Caco-2 (cell line): ENCODE measurements at regions of chr10 and their contacts with region 1.

Region 1: DNA sequence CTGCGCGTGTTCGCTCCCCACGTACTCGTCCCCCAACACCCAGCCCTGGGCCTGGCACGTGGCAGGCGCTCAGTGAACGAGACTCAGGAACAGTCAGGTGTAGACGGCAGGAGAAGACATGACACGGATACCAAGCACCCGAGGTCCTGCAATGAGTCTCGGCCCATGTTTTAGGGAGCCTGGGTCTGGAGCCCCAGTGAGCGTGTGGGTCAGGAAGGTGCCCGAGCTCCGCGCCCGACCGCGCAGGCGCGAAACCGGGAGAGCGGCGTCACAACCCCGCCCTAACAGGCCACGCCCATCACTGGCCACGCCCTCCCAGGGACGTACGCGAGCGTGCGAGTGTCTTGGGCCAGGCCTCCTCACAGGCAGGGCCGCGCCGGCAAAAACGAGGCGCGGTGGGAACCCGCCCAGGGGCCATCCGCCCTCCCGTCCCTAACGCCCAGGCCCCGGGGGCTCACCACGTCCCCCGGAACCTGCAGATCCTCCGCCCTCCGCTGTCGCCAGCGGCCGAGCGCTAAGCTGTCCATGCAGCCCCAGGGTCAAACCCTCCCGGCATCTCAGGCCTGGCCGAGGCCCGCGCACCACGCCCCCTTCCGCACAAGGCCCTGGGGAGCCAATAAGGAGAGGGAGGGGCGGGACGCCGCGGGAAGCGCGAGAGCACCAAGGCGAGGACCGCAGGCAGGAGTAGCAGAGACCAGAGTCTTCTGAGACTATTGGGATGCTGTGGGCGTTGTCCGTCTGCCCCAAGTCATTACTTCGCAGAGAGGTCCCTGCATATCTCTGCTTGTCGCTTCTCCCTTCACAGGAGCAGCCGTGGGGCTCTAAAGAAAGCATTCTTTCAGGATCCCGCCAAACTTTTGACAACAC is at the start of gene C10orf143:
- DNase-seq: peak; percentile 97 to 98
- H3K4me3 ChIP-seq: peak within 1 kb of the TSS; percentile 82
- H3K4me3 Mint-ChIP-seq: peak within 1 kb of the TSS; percentile 91
- H3K27ac Mint-ChIP-seq: peak within 1 kb of the TSS; percentile 91
- H3K4me1 ChIP-seq: peaks cover 5% of the 10 kb centered on the region
- H3K4me1 Mint-ChIP-seq: peaks cover 7% of the 10 kb centered on the region
- H3K27me3 ChIP-seq: no peaks in the 10 kb centered on the region
- H3K27me3 Mint-ChIP-seq: no peaks in the 10 kb centered on the region
- CTCF ChIP-seq: peak in 1 of 2 experiments; percentile 4
- total RNA-seq, gene C10orf143: 0.54 TPM in 1 of 2 replicates, not detected in the other

Region 2: DNA sequence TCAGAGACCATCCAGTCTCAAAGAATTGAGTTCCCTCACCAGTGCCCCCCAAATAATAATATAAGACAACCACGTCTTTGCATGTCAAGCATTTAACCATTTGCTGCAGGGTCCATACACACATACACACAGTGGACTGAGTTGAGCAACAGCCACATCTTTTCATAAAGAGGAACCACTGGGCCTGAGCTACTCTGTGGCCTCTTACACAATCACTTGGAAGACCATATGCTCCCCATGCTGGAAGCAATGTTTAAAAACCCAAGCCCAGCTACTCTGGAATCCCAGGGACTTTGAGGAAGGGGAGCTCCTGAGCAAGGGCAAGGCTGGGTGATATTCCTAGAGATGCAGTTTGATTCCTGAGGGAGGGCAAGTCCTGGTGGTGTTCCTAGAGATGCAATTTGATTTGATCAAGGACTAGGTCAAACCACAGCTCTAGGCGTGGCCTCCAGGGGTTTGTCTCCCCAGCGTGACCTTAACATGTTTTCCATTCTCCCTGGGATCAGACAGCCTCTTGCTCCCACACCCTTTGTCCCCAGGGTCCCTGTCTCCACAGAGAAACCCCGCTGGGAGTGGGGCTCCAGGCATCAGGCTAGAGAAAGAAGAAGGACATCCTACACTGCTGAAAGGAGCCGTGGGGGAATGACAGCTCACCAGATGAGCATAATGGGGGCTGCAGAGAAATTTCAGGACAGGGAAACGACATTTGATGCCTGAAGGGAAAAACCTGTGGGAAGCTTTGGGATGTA is 1019.7 kb before region 1 on chr10:
- CTCF ChIA-PET with region 1: no interaction called
- POLR2A ChIA-PET with region 1: no interaction called
- intact Hi-C with region 1: no loop called
- DNase-seq: no peak
- H3K4me3 ChIP-seq: no peak overlapping the region
- H3K4me3 Mint-ChIP-seq: no peak overlapping the region
- H3K27ac Mint-ChIP-seq: no peak overlapping the region
- H3K4me1 ChIP-seq: no peaks in the 10 kb centered on the region
- H3K4me1 Mint-ChIP-seq: no peaks in the 10 kb centered on the region
- H3K27me3 ChIP-seq: no peaks in the 10 kb centered on the region; the same call in 1 of the 2 replicates
- H3K27me3 Mint-ChIP-seq: peaks cover 10% of the 10 kb centered on the region
- CTCF ChIP-seq: no peak

Region 3: GRCh38 chr10:130127364-130128061 is 17.0 kb after region 1 on chr10:
- CTCF ChIA-PET with region 1: interaction called, 17 read pairs
- POLR2A ChIA-PET with region 1: interaction called, 15 read pairs
- intact Hi-C with region 1: loop called (anchors 1 kb)
- DNase-seq: peak; percentile 67 to 75
- H3K4me3 ChIP-seq: no peak overlapping the region
- H3K4me3 Mint-ChIP-seq: peak overlapping the region; percentile 55
- H3K27ac Mint-ChIP-seq: no peak overlapping the region
- H3K4me1 ChIP-seq: no peaks in the 10 kb centered on the region
- H3K4me1 Mint-ChIP-seq: peaks cover 7% of the 10 kb centered on the region
- H3K27me3 ChIP-seq: no peaks in the 10 kb centered on the region
- H3K27me3 Mint-ChIP-seq: no peaks in the 10 kb centered on the region
- CTCF ChIP-seq: peak; percentile 82 to 91

Region 4: DNA sequence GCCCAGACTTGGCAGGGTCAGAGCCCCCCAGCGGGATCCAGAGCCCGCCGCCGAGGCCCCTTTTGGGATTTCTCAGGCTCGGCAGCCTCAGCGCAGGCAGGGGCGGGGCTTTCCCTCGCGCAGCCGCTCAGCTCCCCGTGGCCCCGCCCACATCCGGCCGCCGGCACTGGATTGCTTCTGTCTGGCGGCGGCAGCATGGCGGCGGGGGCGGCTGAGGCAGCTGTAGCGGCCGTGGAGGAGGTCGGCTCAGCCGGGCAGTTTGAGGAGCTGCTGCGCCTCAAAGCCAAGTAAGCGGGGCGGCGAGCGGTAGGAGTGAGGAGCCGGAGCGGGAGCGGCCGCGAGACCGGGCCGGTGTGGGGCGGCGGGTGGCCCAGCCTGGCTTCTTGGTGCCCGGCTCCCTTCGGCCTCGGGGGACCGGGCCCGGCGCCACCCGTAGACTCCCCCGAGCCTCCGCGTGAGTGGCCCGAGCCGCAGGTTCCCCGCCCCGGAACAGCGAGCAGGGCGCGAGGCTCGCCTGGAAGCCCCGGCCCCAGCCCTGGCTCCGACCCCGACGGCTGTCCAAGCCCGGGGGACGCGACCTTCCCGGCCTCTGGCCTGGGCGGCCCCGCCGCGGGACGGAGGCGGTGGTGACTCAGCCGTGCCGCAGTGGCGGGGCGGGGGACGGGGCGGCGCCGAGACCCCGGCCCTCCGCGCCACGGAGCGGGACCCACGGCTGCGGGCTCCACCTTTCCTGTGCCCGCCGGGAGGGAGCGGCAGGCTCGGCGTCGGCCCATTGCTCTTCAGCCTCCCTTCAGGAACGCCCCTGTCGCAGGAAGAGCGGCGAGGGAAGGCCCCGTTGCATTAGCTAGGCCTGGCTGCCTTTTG is 26.0 kb after region 1 on chr10 and contains the start of gene GLRX3:
- CTCF ChIA-PET with region 1: interaction called, 33 read pairs
- POLR2A ChIA-PET with region 1: interaction called, 66 read pairs
- intact Hi-C with region 1: loop called (anchors 1 kb)
- DNase-seq: peak; percentile 75 to 91
- H3K4me3 ChIP-seq: peak within 1 kb of the TSS; percentile 95
- H3K4me3 Mint-ChIP-seq: peak within 1 kb of the TSS; percentile 84
- H3K27ac Mint-ChIP-seq: peak within 1 kb of the TSS; percentile 50
- H3K4me1 ChIP-seq: peaks cover 10% of the 10 kb centered on the region
- H3K4me1 Mint-ChIP-seq: peaks cover 7% of the 10 kb centered on the region
- H3K27me3 ChIP-seq: no peaks in the 10 kb centered on the region
- H3K27me3 Mint-ChIP-seq: no peaks in the 10 kb centered on the region
- CTCF ChIP-seq: no peak
- total RNA-seq, gene GLRX3: 191 and 195 TPM in 2 replicates